ENCODE measurements at regions of chr18 and their contacts with region 1.

Region 1: GRCh38 chr18:11980555-11981382 is 538 bp upstream of the IMPA2 start:
- DNase-seq: peak; percentile 99
- ATAC-seq: peak; percentile 95
- H3K4me3 Mint-ChIP-seq: peak overlapping the region; percentile 91
- H3K27ac Mint-ChIP-seq: peak overlapping the region; percentile 82
- H3K4me1 Mint-ChIP-seq: peaks cover 16% of the 10 kb centered on the region
- H3K27me3 Mint-ChIP-seq: peaks cover 4% of the 10 kb centered on the region

Region 2: GRCh38 chr18:11908182-11909060 is 72.3 kb before region 1 on chr18 and contains the start of gene MPPE1:
- CTCF ChIA-PET with region 1: no interaction called
- POLR2A ChIA-PET with region 1: no interaction called
- intact Hi-C with region 1: loop called (anchors 1 to 2 kb)
- DNase-seq: peak; percentile 93
- ATAC-seq: peak; percentile 93
- H3K4me3 Mint-ChIP-seq: peak within 1 kb of the TSS; percentile 88
- H3K27ac Mint-ChIP-seq: peak within 1 kb of the TSS; percentile 94
- H3K4me1 Mint-ChIP-seq: peaks cover 18% of the 10 kb centered on the region
- H3K27me3 Mint-ChIP-seq: no peaks in the 10 kb centered on the region
- total RNA-seq, gene MPPE1: 22.4 to 29.6 TPM

Region 3: GRCh38 chr18:11947214-11948191 is 33.3 kb before region 1 on chr18:
- CTCF ChIA-PET with region 1: interaction called, 3 read pairs
- POLR2A ChIA-PET with region 1: interaction called, 3 read pairs
- intact Hi-C with region 1: loop called (anchors 1 kb)
- DNase-seq: peak; percentile 81
- ATAC-seq: peak; percentile 96
- H3K4me3 Mint-ChIP-seq: peak overlapping the region; percentile 74
- H3K27ac Mint-ChIP-seq: peak overlapping the region; percentile 88
- H3K4me1 Mint-ChIP-seq: peaks cover 10% of the 10 kb centered on the region
- H3K27me3 Mint-ChIP-seq: no peaks in the 10 kb centered on the region

Region 4: GRCh38 chr18:11963991-11964484 is 16.7 kb before region 1 on chr18:
- CTCF ChIA-PET with region 1: no interaction called
- POLR2A ChIA-PET with region 1: no interaction called
- intact Hi-C with region 1: no loop called
- DNase-seq: no peak
- ATAC-seq: no peak
- H3K4me3 Mint-ChIP-seq: no peak overlapping the region
- H3K27ac Mint-ChIP-seq: no peak overlapping the region
- H3K4me1 Mint-ChIP-seq: no peaks in the 10 kb centered on the region
- H3K27me3 Mint-ChIP-seq: no peaks in the 10 kb centered on the region

Region 5: GRCh38 chr18:12038639-12039417 is 58.1 kb after region 1 on chr18:
- CTCF ChIA-PET with region 1: interaction called, 5 read pairs
- POLR2A ChIA-PET with region 1: no interaction called
- intact Hi-C with region 1: loop called (anchors 2 to 5 kb)
- DNase-seq: peak; percentile 85
- ATAC-seq: peak; percentile 78
- H3K4me3 Mint-ChIP-seq: peak overlapping the region; percentile 43
- H3K27ac Mint-ChIP-seq: no peak overlapping the region
- H3K4me1 Mint-ChIP-seq: peaks cover 12% of the 10 kb centered on the region
- H3K27me3 Mint-ChIP-seq: peaks cover 14% of the 10 kb centered on the region

Region 6: GRCh38 chr18:12702221-12703095 is 721.7 kb after region 1 on chr18 and contains the starts of genes CEP76 and PSMG2:
- CTCF ChIA-PET with region 1: no interaction called
- POLR2A ChIA-PET with region 1: no interaction called
- intact Hi-C with region 1: loop called in 1 of 2 experiments (anchors 2 kb)
- DNase-seq: peak; percentile 90
- ATAC-seq: peak; percentile 85
- H3K4me3 Mint-ChIP-seq: peak within 1 kb of the TSS; percentile 96
- H3K27ac Mint-ChIP-seq: peak within 1 kb of the TSS; percentile 96
- H3K4me1 Mint-ChIP-seq: peaks cover 30% of the 10 kb centered on the region
- H3K27me3 Mint-ChIP-seq: no peaks in the 10 kb centered on the region
- total RNA-seq, gene CEP76: 12.5 to 13.9 TPM
- total RNA-seq, gene PSMG2: 113 to 118 TPM

Measured in activated CD4-positive, alpha-beta T cell treated with anti-CD3 and anti-CD28 coated beads for 36 hours (primary cell).